ENCODE measurements at regions of chr11 and their contacts with region 1.

Region 1: GRCh38 chr11:67353317-67354074 is at the start of gene POLD4:
- DNase-seq: peak; percentile 89
- ATAC-seq: peak; percentile 82
- H3K4me3 ChIP-seq: peak within 1 kb of the TSS; percentile 68 to 90 (median 71)
- H3K27ac ChIP-seq: peak within 1 kb of the TSS; percentile 79
- H3K4me1 ChIP-seq: peaks cover 46% of the 10 kb centered on the region
- H3K27me3 ChIP-seq: no peaks in the 10 kb centered on the region
- CTCF ChIP-seq: no peak; the same call in 1 of the 2 replicates
- EP300 ChIP-seq: 0 out of 4 replicates have a peak, but pooled peaks of 1 of the 2 experiments have one; percentile 11
- POLR2A ChIP-seq: peak; percentile 68 to 85
- RAD21 ChIP-seq: no peak
- total RNA-seq, gene POLD4: 10.5 and 10.9 TPM in 2 replicates

Region 2: DNA sequence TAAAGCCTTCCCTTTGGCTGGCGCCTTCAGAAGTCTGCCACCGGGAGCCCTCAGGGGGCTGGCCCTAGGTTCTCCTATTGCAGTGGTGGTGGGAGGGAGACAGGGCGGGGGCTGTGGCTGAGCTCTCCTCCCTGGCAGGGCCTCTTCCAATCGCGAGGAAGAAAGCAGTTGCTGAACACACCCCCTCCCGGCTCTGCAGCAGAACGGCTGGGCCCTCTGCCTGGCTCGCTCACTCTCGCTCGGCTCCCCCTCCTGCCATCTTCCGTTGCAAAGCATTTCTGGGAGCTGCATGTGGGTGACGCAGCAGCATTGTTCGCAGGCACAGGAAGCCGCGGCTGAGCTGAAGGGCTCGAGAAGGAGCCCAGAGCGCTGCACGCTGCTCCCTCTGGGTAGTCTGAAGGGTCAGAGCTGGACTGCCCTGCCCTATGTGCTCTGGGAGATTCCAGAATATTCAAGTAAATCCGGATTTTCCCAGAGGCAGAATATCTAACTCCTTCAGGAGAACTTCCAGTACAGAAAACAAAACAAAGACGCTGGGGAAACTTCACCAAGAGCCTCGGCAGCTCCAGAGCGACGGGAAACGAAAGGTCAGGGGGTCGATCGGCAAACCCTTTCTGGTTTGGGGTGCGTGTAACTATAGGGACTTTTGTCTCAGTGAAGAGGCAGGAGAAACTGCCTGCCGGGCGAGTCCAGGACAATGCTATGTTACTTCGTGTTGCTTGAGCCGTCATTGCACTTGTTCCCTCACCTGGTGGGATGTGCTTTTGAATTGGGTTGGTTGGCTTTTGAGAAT is 113.5 kb before region 1 on chr11:
- CTCF ChIA-PET with region 1: no interaction called
- POLR2A ChIA-PET with region 1: interaction called, 20 read pairs
- in situ Hi-C with region 1: no loop called
- intact Hi-C with region 1: no loop called
- DNase-seq: peak; percentile 96
- ATAC-seq: peak; percentile 97
- H3K4me3 ChIP-seq: peak overlapping the region; percentile 72 to 82 (median 80)
- H3K27ac ChIP-seq: peak overlapping the region; percentile 89
- H3K4me1 ChIP-seq: peaks cover 41% of the 10 kb centered on the region
- H3K27me3 ChIP-seq: no peaks in the 10 kb centered on the region; a peak in 1 of 5 replicates
- CTCF ChIP-seq: peak; percentile 41
- EP300 ChIP-seq: 0 out of 4 replicates have a peak, but pooled peaks of 1 of the 2 experiments have one; percentile 11
- POLR2A ChIP-seq: peak; percentile 96 to 97
- RAD21 ChIP-seq: peak; percentile 62

Region 3: DNA sequence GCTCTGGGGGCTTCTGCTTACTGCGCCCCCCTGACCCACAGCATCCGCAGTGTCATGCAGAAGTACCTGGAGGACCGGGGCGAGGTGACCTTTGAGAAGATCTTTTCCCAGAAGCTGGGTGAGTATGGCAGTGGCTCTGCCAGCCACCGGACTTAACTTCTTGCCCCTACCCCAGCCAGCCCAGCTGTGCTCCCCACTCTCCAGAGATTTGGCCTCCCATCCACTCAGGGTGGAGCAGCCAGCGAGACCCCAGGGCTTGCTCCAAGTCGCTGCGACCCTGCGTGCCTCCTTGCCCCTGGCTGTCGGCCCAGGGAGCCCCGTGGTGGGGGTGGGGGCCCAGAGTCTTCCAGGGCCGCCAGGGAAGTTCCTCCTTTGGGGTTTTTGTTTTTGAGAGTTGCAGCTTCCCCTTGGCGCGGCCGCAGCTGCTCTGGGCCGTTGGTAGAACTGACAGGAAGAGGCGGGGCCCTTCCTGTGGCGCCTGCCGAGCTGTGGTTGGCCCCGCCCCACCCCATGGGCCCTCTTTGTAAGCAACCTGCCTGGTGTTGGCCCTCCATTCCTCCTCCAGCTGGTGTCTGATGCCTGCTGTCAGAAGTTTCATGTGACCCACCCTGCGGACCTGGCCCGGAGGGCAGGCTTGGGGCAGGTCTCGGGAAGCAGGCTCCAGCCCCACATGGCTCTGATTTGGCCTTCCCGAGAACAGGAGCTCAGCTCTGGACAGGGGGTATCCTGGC is 76.1 kb before region 1 on chr11:
- CTCF ChIA-PET with region 1: no interaction called
- POLR2A ChIA-PET with region 1: no interaction called
- in situ Hi-C with region 1: no loop called
- intact Hi-C with region 1: no loop called
- DNase-seq: no peak
- ATAC-seq: no peak
- H3K4me3 ChIP-seq: no peak overlapping the region
- H3K27ac ChIP-seq: no peak overlapping the region
- H3K4me1 ChIP-seq: peaks cover 6% of the 10 kb centered on the region; the same call in 1 of the 2 replicates
- H3K27me3 ChIP-seq: no peaks in the 10 kb centered on the region
- CTCF ChIP-seq: no peak
- EP300 ChIP-seq: no peak
- POLR2A ChIP-seq: no peak
- RAD21 ChIP-seq: no peak

Region 4: GRCh38 chr11:67288452-67289225 is 64.9 kb before region 1 on chr11:
- CTCF ChIA-PET with region 1: no interaction called
- POLR2A ChIA-PET with region 1: interaction called, 17 read pairs
- in situ Hi-C with region 1: no loop called
- intact Hi-C with region 1: no loop called
- DNase-seq: peak; percentile 85
- ATAC-seq: peak; percentile 80
- H3K4me3 ChIP-seq: peak overlapping the region; percentile 69 to 94 (median 91)
- H3K27ac ChIP-seq: peak overlapping the region; percentile 100
- H3K4me1 ChIP-seq: peaks cover 37% of the 10 kb centered on the region
- H3K27me3 ChIP-seq: no peaks in the 10 kb centered on the region
- CTCF ChIP-seq: peak; percentile 74
- EP300 ChIP-seq: peak in 1 of 2 experiments; percentile 67; a peak in 2 of 4 replicates
- POLR2A ChIP-seq: peak in 1 of 2 experiments; percentile 88; a peak in 2 of 4 replicates
- RAD21 ChIP-seq: peak; percentile 88

Region 5: GRCh38 chr11:67303132-67303834 is 50.2 kb before region 1 on chr11 and contains the start of gene SSH3:
- CTCF ChIA-PET with region 1: no interaction called
- POLR2A ChIA-PET with region 1: interaction called, 13 read pairs
- in situ Hi-C with region 1: no loop called
- intact Hi-C with region 1: no loop called
- DNase-seq: peak; percentile 56
- ATAC-seq: peak; percentile 86
- H3K4me3 ChIP-seq: peak within 1 kb of the TSS; percentile 89 to 98 (median 90)
- H3K27ac ChIP-seq: peak within 1 kb of the TSS; percentile 61
- H3K4me1 ChIP-seq: peaks cover 20% of the 10 kb centered on the region
- H3K27me3 ChIP-seq: no peaks in the 10 kb centered on the region
- CTCF ChIP-seq: 0 out of 2 replicates have a peak, but pooled peaks have one; percentile 5
- EP300 ChIP-seq: no peak
- POLR2A ChIP-seq: peak in 1 of 2 experiments; percentile 69; a peak in 2 of 4 replicates
- RAD21 ChIP-seq: no peak; the same call in 1 of the 2 replicates
- total RNA-seq, gene SSH3: 7.5 and 12.4 TPM in 2 replicates

Region 6: DNA sequence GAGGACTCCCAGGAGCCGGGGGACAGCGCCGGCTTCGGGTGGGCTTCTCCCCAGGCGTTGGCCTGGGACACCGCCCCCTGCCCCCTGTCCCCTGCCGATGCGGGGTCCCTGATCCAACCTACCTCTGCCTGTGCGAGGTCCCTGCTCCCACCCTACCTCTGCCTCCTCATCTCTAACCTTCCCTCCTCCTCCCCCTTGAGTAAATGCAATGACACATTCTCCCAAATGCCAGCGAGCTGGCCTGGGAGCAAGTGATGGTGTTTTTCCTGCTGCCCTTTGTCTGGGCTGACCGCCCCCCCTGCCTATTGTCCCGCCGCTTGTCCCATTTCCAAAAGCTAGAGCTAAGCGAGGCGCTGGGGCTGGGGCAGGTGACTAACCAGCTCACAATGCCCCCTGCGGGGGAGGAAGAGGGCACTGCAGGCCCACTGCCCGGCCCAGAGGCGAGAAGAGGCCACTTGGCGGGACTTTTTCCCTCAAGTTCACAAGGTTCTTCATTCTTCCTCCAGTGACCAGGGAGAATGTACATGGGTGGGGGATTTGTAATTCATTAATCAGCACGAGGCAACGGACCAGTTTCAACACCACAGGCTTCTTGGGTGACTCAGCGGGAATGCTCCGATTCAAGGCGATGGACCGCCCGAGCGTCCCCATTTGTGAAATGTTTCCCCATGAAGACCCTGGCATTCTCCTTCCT is 20.6 kb after region 1 on chr11:
- CTCF ChIA-PET with region 1: interaction called, 9 read pairs
- POLR2A ChIA-PET with region 1: interaction called, 365 read pairs
- in situ Hi-C with region 1: no loop called
- intact Hi-C with region 1: loop called (anchors 1 kb)
- DNase-seq: peak; percentile 82
- ATAC-seq: peak; percentile 65
- H3K4me3 ChIP-seq: peak overlapping the region; percentile 69 to 75 (median 75)
- H3K27ac ChIP-seq: no peak overlapping the region
- H3K4me1 ChIP-seq: peaks cover 32% of the 10 kb centered on the region
- H3K27me3 ChIP-seq: peaks cover 3 to 8% of the 10 kb centered on the region in 2 experiments; a peak in 3 of 5 replicates
- CTCF ChIP-seq: peak; percentile 72
- EP300 ChIP-seq: peak in 1 of 2 experiments; percentile 5; a peak in 1 of 4 replicates
- POLR2A ChIP-seq: no peak
- RAD21 ChIP-seq: peak; percentile 38

Region 7: GRCh38 chr11:67382276-67383136 is 29.0 kb after region 1 on chr11:
- CTCF ChIA-PET with region 1: interaction called, 45 read pairs
- POLR2A ChIA-PET with region 1: interaction called, 365 read pairs
- in situ Hi-C with region 1: loop called (anchors 5 kb)
- intact Hi-C with region 1: loop called (anchors 1 kb)
- DNase-seq: peak; percentile 67
- ATAC-seq: peak; percentile 86
- H3K4me3 ChIP-seq: no peak overlapping the region
- H3K27ac ChIP-seq: no peak overlapping the region
- H3K4me1 ChIP-seq: peaks cover 30% of the 10 kb centered on the region
- H3K27me3 ChIP-seq: peaks cover 1 to 40% of the 10 kb centered on the region in 2 experiments; a peak in 3 of 5 replicates
- CTCF ChIP-seq: peak; percentile 97
- EP300 ChIP-seq: no peak
- POLR2A ChIP-seq: no peak
- RAD21 ChIP-seq: peak; percentile 92

Region 8: DNA sequence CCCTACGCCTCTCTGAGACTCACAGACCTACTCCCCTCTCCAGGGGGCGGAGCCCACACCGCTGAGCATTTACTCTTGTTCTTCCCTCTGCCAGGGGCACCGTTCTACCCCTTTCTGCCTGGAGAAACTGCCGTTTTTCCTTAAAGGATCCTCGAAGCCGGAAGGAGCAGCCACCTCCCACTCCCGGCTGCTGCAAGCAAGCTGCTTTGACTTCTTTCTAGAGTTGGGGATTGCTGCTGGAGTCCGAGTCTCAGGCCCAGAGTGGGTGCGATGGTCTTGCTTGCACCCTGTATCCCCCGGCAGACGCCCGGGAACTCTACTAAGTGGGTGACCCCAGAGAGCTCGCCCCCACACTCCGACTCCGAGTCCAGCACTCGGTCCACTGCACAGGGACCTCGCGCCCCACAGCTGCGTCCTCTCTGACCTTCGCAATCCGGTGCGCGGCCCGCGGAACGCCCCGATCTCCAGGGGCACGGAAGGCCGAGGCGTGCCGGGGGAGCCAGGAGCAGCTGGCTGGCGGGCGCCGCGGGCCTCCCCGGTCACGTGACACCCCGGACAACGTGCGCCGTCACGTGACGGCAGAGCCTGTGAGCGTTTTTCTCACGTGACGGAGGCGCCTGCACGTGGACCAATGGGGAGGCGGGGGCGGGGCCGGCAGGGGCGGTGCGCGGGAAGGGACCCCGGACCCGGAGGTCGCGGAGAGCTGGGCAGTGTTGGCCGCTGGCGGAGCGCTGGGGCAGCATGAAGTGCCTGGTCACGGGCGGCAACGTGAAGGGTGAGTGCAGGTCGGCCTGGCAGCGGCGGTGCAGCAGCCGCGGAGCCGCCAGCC is 38.0 kb after region 1 on chr11 and contains the start of gene RAD9A:
- CTCF ChIA-PET with region 1: no interaction called
- POLR2A ChIA-PET with region 1: interaction called, 365 read pairs
- in situ Hi-C with region 1: loop called (anchors 5 kb)
- intact Hi-C with region 1: no loop called
- DNase-seq: peak; percentile 90
- ATAC-seq: peak; percentile 86
- H3K4me3 ChIP-seq: peak within 1 kb of the TSS; percentile 74 to 85 (median 78)
- H3K27ac ChIP-seq: peak within 1 kb of the TSS; percentile 82
- H3K4me1 ChIP-seq: peaks cover 43% of the 10 kb centered on the region
- H3K27me3 ChIP-seq: peaks cover 1 to 9% of the 10 kb centered on the region in 2 experiments; a peak in 3 of 5 replicates
- CTCF ChIP-seq: peak; percentile 26; the same call in 1 of the 2 replicates
- EP300 ChIP-seq: no peak
- POLR2A ChIP-seq: peak; percentile 84 to 95
- RAD21 ChIP-seq: 0 out of 2 replicates have a peak, but pooled peaks have one; percentile 34
- total RNA-seq, gene RAD9A: 6.1 and 10.1 TPM in 2 replicates

Measured in HepG2 (cell line).